Activated CD8-positive, alpha-beta T cell treated with anti-CD3 and anti-CD28 coated beads, Interleukin-2, amount 10 ng/mL, durations not matched to agents 7 days and 5 days (primary cell): ENCODE measurements at regions of chr10 and their contacts with region 1.

Region 1: DNA sequence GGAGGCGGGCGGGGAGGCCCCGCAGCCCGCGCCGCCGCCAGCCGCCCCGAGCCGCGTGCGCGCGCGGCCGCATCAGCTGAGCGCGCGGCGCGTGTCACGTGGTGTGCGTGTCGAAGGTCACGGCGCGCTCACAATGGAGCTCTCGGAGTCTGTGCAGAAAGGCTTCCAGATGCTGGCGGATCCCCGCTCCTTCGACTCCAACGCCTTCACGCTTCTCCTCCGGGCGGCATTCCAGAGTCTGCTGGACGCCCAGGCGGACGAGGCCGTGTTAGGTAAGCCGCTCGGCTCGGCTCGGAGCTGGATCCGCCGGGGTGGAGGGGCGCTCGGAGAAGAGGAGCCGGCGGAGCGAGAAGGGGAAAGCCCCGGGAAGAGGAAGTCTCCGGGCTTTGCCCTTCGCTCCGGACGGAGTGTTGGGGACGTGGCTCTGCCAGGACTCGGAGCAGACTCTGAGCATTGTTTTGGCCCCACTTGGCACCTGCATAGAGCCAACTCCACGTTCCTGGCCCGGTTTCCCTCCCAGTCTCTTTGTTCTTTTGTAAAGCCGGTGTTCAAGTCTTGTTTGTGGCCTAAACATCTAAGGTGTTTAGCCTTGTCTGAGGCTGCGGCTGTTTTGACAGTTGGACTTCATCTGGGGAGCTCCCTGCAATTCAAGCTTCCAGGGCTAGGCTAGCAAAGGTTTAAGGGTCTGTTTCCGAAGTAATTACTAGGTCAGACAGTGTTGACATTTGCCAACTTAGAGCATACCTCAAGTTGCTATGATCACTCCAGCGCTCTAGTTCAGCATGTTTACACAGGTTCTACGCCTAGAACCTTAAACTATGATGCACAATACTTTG is at the start of gene COMMD3:
- DNase-seq: peak; percentile 84
- ATAC-seq: peak; percentile 79
- H3K4me3 Mint-ChIP-seq: peak within 1 kb of the TSS; percentile 88
- H3K27ac Mint-ChIP-seq: peak within 1 kb of the TSS; percentile 87
- H3K4me1 Mint-ChIP-seq: peaks cover 36% of the 10 kb centered on the region
- H3K27me3 Mint-ChIP-seq: peaks cover 14% of the 10 kb centered on the region
- total RNA-seq, gene COMMD3: 59.7 to 63.3 TPM

Region 2: GRCh38 chr10:22228943-22229801 is 87.3 kb before region 1 on chr10:
- CTCF ChIA-PET with region 1: interaction called, 9 read pairs
- POLR2A ChIA-PET with region 1: interaction called, 20 read pairs
- DNase-seq: peak; percentile 89
- ATAC-seq: peak; percentile 87
- H3K4me3 Mint-ChIP-seq: peak overlapping the region; percentile 81
- H3K27ac Mint-ChIP-seq: peak overlapping the region; percentile 94
- H3K4me1 Mint-ChIP-seq: peaks cover 20% of the 10 kb centered on the region
- H3K27me3 Mint-ChIP-seq: peaks cover 25% of the 10 kb centered on the region

Region 3: GRCh38 chr10:22251751-22252223 is 64.7 kb before region 1 on chr10:
- CTCF ChIA-PET with region 1: interaction called, 3 read pairs
- POLR2A ChIA-PET with region 1: interaction called, 14 read pairs
- DNase-seq: peak; percentile 72
- ATAC-seq: peak; percentile 74
- H3K4me3 Mint-ChIP-seq: peak overlapping the region; percentile 88
- H3K27ac Mint-ChIP-seq: peak overlapping the region; percentile 95
- H3K4me1 Mint-ChIP-seq: peaks cover 41% of the 10 kb centered on the region
- H3K27me3 Mint-ChIP-seq: peaks cover 6% of the 10 kb centered on the region

Region 4: DNA sequence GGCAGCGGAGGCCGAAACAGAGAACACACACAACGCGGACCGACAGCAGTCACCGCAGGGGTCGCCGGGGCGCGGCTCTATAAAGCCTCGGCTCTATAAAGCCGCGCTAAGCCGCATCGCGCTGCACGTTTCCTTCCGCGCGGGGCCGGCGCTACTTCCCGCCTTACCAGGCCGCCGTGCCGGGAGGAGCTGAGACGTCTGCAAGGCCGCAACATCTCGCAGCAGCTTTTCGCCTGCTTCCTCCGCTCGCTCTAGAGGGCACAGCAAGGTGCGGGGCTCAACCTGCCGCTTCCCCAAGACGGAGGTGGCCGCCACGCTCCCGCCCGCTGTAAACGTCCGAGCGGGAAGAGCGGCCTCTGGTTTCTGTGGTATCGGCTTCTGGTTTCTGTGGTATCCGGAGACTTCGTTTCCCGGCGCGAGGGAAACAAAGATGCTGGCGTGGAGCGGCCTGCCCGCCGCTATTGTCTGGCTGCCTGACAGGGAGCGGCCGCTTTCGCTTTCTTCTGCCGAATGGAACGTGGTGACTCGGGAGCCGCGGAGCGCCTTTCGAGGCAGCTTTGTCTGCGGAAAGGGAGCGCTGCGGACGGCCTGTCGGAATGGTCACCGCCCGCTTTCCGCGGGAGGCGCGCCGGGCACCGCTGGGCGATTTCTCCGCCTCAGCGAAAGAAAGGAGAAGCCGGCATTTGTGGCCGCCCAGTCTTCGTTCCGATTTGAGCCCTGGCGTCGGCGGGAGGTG is 120.5 kb after region 1 on chr10:
- CTCF ChIA-PET with region 1: no interaction called
- POLR2A ChIA-PET with region 1: interaction called, 10 read pairs
- DNase-seq: peak; percentile 90
- ATAC-seq: peak; percentile 94
- H3K4me3 Mint-ChIP-seq: peak overlapping the region; percentile 89
- H3K27ac Mint-ChIP-seq: peak overlapping the region; percentile 95
- H3K4me1 Mint-ChIP-seq: peaks cover 37% of the 10 kb centered on the region
- H3K27me3 Mint-ChIP-seq: peaks cover 14% of the 10 kb centered on the region

Region 5: GRCh38 chr10:22505911-22506685 is 189.6 kb after region 1 on chr10:
- CTCF ChIA-PET with region 1: no interaction called
- POLR2A ChIA-PET with region 1: no interaction called
- DNase-seq: peak; percentile 73
- ATAC-seq: peak; percentile 96
- H3K4me3 Mint-ChIP-seq: no peak overlapping the region
- H3K27ac Mint-ChIP-seq: no peak overlapping the region
- H3K4me1 Mint-ChIP-seq: peaks cover 26% of the 10 kb centered on the region
- H3K27me3 Mint-ChIP-seq: peaks cover 37% of the 10 kb centered on the region